Psoas muscle (tissue), 8 donors: ENCODE measurements at regions of chr12 and their contacts with region 1.

Region 1: GRCh38 chr12:76031537-76032073 is at the start of gene PHLDA1:
- DNase-seq: peak; percentile 95 to 96
- ATAC-seq: peak; percentile 83 to 94 (median 88)
- H3K4me3 ChIP-seq: peak within 1 kb of the TSS; percentile 84
- H3K27ac ChIP-seq: peak within 1 kb of the TSS; percentile 88
- H3K4me1 ChIP-seq: peaks cover 6% of the 10 kb centered on the region
- H3K27me3 ChIP-seq: peaks cover 0 to 36% (median 3%) of the 10 kb centered on the region in 3 donors
- CTCF ChIP-seq: peak; percentile 53
- total RNA-seq, gene PHLDA1: 2.2 to 3.7 (median 3.1) TPM

Region 2: GRCh38 chr12:75511116-75512048 is 520.2 kb before region 1 on chr12 and contains the start of gene KRR1:
- intact Hi-C with region 1: loop called in 1 of 2 experiments (anchors 5 kb)
- DNase-seq: peak; percentile 89 to 94
- ATAC-seq: peak; percentile 99 to 100 (median 100)
- H3K4me3 ChIP-seq: peak within 1 kb of the TSS; percentile 91
- H3K27ac ChIP-seq: peak within 1 kb of the TSS; percentile 84
- H3K4me1 ChIP-seq: peaks cover 24% of the 10 kb centered on the region
- H3K27me3 ChIP-seq: no peaks in the 10 kb centered on the region
- CTCF ChIP-seq: no peak
- total RNA-seq, gene KRR1: 43.1 to 64.9 (median 50.9) TPM

Region 3: DNA sequence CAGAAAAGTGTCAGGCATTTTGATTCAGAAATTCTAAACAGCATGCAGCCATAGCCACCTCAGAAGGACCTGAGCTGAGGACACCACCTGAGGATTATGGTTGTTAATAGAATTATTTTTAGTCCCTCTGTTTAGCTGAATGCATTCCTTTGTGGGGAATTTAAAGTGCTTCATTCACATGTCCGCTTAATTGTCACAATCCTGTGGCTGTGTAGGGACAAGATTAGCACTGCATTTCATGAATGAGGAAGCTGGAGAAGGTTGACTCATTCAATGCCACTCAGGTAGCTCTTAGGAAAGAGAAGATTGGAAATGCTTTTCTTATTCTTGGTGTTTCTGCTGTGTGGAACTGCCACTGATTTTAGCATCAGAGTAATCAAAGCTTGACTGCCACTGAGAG is 478.2 kb before region 1 on chr12:
- intact Hi-C with region 1: loop called in 1 of 2 experiments (anchors 10 kb)
- DNase-seq: no peak
- ATAC-seq: no peak
- H3K4me3 ChIP-seq: no peak overlapping the region
- H3K27ac ChIP-seq: no peak overlapping the region
- H3K4me1 ChIP-seq: peaks cover 8% of the 10 kb centered on the region
- H3K27me3 ChIP-seq: no peaks in the 10 kb centered on the region
- CTCF ChIP-seq: no peak

Region 4: GRCh38 chr12:75722714-75723200 is 308.8 kb before region 1 on chr12:
- intact Hi-C with region 1: loop called in 1 of 2 experiments (anchors 10 kb)
- DNase-seq: peak in 1 of 2 donors; percentile 15
- ATAC-seq: peak; percentile 64 to 86 (median 76)
- H3K4me3 ChIP-seq: no peak overlapping the region
- H3K27ac ChIP-seq: peak overlapping the region; percentile 59
- H3K4me1 ChIP-seq: peaks cover 25% of the 10 kb centered on the region
- H3K27me3 ChIP-seq: no peaks in the 10 kb centered on the region
- CTCF ChIP-seq: no peak

Region 5: DNA sequence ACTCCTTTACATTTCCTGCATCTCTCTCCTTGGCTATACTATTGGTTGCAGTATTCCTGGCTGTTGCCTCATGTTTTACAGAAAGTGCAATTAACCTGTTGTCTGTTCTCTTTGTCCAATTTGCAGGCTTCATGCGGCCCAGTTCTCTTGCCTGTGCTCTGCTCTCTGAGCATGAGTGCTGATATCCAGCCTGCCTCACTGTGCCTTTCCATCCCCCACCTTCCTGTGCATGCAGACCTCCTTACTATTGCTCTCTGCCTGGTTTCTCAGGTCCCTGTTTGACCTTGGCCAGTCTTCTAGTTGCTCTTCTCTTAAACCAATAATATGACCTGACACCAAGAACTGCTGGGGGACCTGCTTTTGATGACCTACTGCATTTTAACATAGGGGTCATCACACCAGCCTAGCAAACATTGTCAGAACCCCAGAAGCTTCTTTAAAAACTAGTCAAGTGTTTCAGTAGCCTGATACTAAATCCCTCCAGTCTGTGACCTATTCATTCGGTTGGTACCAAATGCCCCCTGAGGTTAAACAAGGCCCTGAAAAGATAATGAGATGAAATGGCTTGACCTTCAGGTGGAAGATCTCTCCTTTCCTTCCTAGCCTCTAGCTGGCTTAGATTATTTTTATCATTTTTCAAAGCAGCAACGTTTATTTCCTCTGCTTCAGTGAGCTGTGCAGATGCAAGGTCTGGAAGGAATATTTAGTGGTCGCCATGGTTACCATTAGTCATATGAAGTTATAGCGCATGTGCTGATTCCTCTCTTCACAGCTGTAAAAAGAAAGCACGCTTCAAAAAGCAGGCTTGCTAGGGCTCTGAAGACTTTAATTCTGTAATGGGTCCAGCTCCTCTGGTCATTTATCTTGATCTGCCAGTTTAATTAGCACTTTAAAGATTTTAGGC is 216.5 kb before region 1 on chr12:
- intact Hi-C with region 1: loop called in 1 of 2 experiments (anchors 5 kb)
- DNase-seq: no peak
- ATAC-seq: peak in 3 of 4 donors; percentile 30 to 73 (median 65)
- H3K4me3 ChIP-seq: no peak overlapping the region
- H3K27ac ChIP-seq: no peak overlapping the region
- H3K4me1 ChIP-seq: no peaks in the 10 kb centered on the region
- H3K27me3 ChIP-seq: peaks cover 0 to 3% (median 0%) of the 10 kb centered on the region in 3 donors
- CTCF ChIP-seq: no peak

Region 6: DNA sequence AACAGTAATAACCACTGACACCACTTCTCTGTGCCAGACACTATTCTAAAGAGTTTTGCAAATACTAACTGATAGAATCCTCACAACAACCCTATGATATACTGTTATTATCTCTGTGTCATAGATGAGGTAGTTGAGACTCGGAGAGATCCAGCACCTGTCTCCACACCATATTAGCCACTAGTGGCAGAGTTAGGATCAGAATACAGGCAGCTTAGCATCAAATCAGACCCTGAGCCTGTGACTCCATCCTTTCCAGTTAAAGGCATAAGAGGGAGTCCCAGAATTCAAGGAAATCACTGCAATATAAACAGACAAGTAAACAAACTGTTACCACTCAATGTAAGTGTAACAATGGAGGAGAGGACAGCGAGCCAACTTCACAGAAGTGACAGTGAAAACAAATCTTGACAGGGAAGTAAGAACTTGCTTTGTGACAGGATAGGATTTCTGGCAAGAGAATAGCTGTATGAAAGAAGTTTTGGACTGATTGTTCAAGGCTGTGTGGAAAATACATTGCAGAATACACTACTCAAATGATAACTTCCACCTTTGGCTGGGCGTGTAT is 64.6 kb after region 1 on chr12:
- intact Hi-C with region 1: no loop called
- DNase-seq: no peak
- ATAC-seq: no peak
- H3K4me3 ChIP-seq: no peak overlapping the region
- H3K27ac ChIP-seq: no peak overlapping the region
- H3K4me1 ChIP-seq: no peaks in the 10 kb centered on the region
- H3K27me3 ChIP-seq: no peaks in the 10 kb centered on the region
- CTCF ChIP-seq: no peak